Transverse colon (tissue), 4 donors: ENCODE measurements at regions of chr1 and their contacts with region 1.

Region 1: GRCh38 chr1:203486618-203487370 is 7.2 kb upstream of the OPTC start:
- DNase-seq: no peak
- H3K4me3 ChIP-seq: peak overlapping the region in 2 of 4 donors; percentile 19 to 35
- H3K27ac ChIP-seq: peak overlapping the region; percentile 67 to 82 (median 73)
- H3K4me1 ChIP-seq: peaks cover 3 to 22% (median 4%) of the 10 kb centered on the region in 4 donors
- H3K27me3 ChIP-seq: no peaks in the 10 kb centered on the region
- CTCF ChIP-seq: no peak
- EP300 ChIP-seq: no peak
- POLR2A ChIP-seq: no peak

Region 2: DNA sequence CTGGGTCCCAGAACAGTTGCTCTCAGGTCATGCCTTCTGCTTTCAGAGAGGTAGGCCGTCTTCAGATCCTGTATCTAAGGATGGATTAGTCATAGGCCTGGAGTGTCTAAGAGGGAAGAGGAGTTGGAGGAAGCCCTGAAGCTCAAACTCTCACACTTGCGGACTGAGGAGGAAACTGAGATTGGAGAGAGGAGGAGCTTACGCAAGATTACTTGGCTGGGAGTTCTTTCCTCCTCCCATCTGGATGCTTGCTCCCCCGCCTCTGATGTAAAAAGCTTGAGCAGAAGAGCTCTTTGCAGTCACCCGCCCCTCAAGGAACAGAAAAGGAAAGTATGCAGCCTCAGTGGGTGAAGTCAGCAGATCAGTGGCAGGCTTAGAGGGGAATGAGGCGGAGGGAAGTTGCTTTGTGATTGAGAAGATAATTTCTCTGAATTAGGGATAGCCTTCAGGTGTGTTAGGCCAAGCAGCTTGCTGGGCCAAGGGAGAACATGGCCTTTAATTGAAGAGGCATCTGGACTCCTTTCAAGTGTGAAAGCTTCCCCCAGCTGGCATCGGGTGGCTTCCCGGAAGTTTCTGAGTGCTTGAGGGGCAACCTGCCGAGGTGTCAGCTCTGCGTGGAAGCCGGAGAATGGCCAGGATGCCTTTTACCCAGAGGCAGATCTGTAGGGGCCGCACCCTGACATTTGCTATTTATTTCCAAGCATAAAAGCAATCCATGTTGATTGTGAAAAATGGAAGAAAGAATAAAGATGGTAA is 352.6 kb before region 1 on chr1:
- in situ Hi-C with region 1: no loop called
- intact Hi-C with region 1: no loop called
- DNase-seq: peak; percentile 23
- H3K4me3 ChIP-seq: no peak overlapping the region
- H3K27ac ChIP-seq: peak overlapping the region in 2 of 4 donors; percentile 25 to 51
- H3K4me1 ChIP-seq: peaks cover 0 to 16% (median 3%) of the 10 kb centered on the region in 4 donors
- H3K27me3 ChIP-seq: no peaks in the 10 kb centered on the region
- CTCF ChIP-seq: no peak
- EP300 ChIP-seq: no peak
- POLR2A ChIP-seq: no peak

Region 3: GRCh38 chr1:203267347-203267846 is 219.4 kb before region 1 on chr1:
- in situ Hi-C with region 1: loop called in 3 of 4 experiments (anchors 10 kb)
- intact Hi-C with region 1: loop called (anchors 2 kb)
- DNase-seq: peak; percentile 90
- H3K4me3 ChIP-seq: peak overlapping the region; percentile 40 to 68 (median 46)
- H3K27ac ChIP-seq: peak overlapping the region; percentile 76 to 87 (median 80)
- H3K4me1 ChIP-seq: peaks cover 2 to 22% (median 8%) of the 10 kb centered on the region in 4 donors
- H3K27me3 ChIP-seq: no peaks in the 10 kb centered on the region
- CTCF ChIP-seq: peak; percentile 94 to 97 (median 95)
- EP300 ChIP-seq: no peak
- POLR2A ChIP-seq: no peak